ENCODE measurements at regions of chr12 and their contacts with region 1.

Region 1: GRCh38 chr12:107042801-107043200 is 50.5 kb downstream of the CRY1 start:
- DNase-seq: no peak
- ATAC-seq: no peak
- H3K4me3 Mint-ChIP-seq: no peak overlapping the region
- H3K27ac Mint-ChIP-seq: no peak overlapping the region
- H3K4me1 Mint-ChIP-seq: no peaks in the 10 kb centered on the region
- H3K27me3 Mint-ChIP-seq: no peaks in the 10 kb centered on the region
- CTCF ChIP-seq: no peak

Region 2: DNA sequence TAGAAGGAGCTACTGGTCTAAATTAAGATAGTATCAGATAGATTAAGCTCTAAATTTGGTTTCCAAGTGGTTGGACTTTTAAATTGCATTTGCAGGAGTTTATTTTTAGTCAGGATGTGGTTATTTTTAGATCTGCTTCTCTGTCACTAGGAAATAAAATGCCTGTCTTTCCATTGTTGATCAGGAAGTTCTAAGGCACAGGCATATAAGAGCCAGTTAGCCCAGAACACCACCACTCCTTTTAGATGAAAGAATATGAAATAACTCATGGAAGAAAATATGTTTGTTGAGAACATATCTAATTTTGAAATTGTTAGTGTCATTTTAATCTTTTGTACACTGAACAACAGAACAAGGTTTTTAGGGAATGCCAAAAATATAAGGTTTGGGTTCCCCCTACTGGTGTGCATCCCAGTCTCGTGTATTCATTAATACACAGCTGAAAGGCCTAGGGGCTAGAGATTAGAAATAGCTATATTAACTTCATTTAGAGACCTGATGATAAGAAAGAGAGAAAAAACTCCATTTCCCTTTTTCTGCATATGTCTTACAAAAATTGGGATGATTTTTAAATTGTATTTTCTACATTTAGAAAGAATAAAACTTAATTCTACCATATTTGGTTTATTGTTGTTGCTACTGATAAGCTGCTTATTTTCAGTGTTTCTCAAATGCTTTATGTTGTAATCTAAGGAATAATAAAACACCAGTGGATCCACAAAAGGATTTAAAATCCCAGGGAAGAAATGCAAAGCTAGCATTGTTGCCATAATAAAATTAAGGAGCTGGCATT is 201.1 kb before region 1 on chr12:
- CTCF ChIA-PET with region 1: no interaction called
- POLR2A ChIA-PET with region 1: no interaction called
- intact Hi-C with region 1: no loop called
- DNase-seq: no peak
- ATAC-seq: no peak
- H3K4me3 Mint-ChIP-seq: no peak overlapping the region
- H3K27ac Mint-ChIP-seq: no peak overlapping the region
- H3K4me1 Mint-ChIP-seq: no peaks in the 10 kb centered on the region
- H3K27me3 Mint-ChIP-seq: no peaks in the 10 kb centered on the region
- CTCF ChIP-seq: no peak

Region 3: DNA sequence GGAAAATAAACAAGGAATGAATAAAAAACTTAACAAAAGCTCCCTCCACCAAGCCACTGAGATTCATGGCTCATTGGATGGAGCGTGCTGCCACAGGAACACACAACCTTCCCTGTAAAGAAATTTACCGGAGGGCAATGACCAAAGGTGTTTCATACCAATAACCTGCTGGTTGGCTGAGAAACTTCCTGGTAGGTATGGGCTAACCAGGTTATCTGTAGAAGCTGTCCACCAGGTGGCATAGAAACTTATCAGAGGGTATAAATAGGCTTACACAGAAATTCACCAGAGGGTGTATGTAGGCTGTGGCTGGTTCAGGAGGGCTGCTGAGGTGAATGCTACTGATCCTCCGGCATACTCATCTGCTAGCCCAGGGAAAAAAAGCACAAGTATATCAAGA is 28.8 kb before region 1 on chr12:
- CTCF ChIA-PET with region 1: no interaction called
- POLR2A ChIA-PET with region 1: no interaction called
- intact Hi-C with region 1: loop called (anchors 1 kb)
- DNase-seq: no peak
- ATAC-seq: no peak
- H3K4me3 Mint-ChIP-seq: no peak overlapping the region
- H3K27ac Mint-ChIP-seq: no peak overlapping the region
- H3K4me1 Mint-ChIP-seq: no peaks in the 10 kb centered on the region
- H3K27me3 Mint-ChIP-seq: peaks cover 2% of the 10 kb centered on the region
- CTCF ChIP-seq: no peak

Region 4: GRCh38 chr12:107053709-107054108 is 10.9 kb after region 1 on chr12:
- CTCF ChIA-PET with region 1: no interaction called
- POLR2A ChIA-PET with region 1: no interaction called
- intact Hi-C with region 1: no loop called
- DNase-seq: no peak
- ATAC-seq: no peak
- H3K4me3 Mint-ChIP-seq: no peak overlapping the region
- H3K27ac Mint-ChIP-seq: no peak overlapping the region
- H3K4me1 Mint-ChIP-seq: no peaks in the 10 kb centered on the region
- H3K27me3 Mint-ChIP-seq: no peaks in the 10 kb centered on the region
- CTCF ChIP-seq: no peak

Measured in activated B cell treated with CpG ODN at 0.5 μM for 24 hours (primary cell).